HEK293 (cell line): ENCODE measurements at regions of chr22 and their contacts with region 1.

Region 1: GRCh38 chr22:24175160-24175808 is 6.0 kb upstream of the SUSD2 start:
- H3K4me3 ChIP-seq: no peak overlapping the region
- H3K27ac ChIP-seq: no peak overlapping the region
- H3K4me1 ChIP-seq: no peaks in the 10 kb centered on the region
- CTCF ChIP-seq: peak; percentile 92

Region 2: GRCh38 chr22:24106385-24107381 is 68.6 kb before region 1 on chr22:
- CTCF ChIA-PET with region 1: interaction called, 10 read pairs
- POLR2A ChIA-PET with region 1: no interaction called
- H3K4me3 ChIP-seq: no peak overlapping the region
- H3K27ac ChIP-seq: no peak overlapping the region
- H3K4me1 ChIP-seq: no peaks in the 10 kb centered on the region
- CTCF ChIP-seq: no peak

Region 3: DNA sequence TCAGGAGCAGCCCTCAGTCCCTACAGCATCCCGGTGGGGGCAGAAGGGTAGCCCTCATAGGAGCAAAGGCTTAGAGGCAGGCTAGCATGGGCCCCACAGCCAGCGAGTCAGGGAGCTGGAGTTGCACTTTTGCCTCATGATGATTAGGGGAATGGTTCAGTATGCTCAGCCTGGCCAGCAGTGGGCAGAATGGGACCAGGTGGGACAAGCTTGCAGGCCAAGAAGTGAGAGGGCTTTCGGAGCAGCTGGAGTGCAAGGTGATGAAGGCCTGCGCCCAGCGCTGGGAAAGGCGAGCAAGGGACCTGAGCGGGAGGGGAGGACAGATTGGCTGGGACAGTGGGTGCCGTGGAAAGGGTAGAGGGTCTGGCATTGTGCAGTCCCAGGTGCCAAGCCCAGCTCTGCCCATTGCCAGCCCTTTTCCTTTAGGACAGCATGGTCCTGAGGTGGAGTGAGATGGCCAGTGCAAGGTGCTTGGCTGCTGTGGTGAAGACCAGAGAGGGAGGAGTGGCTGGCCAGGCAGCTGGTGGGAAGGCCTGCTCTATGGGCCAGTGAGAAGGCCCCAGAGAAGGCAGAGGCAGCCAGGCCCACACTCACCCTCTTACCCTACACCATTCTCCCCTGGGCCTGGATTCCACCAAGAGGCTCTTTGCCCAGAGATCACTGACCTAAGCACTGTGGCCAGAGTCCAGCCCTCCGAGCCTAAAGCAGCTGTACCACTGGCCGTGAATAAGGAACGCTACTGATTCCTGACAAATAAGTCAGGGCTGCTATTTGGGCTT is 41.9 kb before region 1 on chr22:
- CTCF ChIA-PET with region 1: interaction called, 13 read pairs
- POLR2A ChIA-PET with region 1: no interaction called
- H3K4me3 ChIP-seq: no peak overlapping the region
- H3K27ac ChIP-seq: no peak overlapping the region
- H3K4me1 ChIP-seq: no peaks in the 10 kb centered on the region
- CTCF ChIP-seq: no peak; the same call in 1 of the 2 replicates